ENCODE measurements at regions of chr12 and their contacts with region 1.

Region 1: DNA sequence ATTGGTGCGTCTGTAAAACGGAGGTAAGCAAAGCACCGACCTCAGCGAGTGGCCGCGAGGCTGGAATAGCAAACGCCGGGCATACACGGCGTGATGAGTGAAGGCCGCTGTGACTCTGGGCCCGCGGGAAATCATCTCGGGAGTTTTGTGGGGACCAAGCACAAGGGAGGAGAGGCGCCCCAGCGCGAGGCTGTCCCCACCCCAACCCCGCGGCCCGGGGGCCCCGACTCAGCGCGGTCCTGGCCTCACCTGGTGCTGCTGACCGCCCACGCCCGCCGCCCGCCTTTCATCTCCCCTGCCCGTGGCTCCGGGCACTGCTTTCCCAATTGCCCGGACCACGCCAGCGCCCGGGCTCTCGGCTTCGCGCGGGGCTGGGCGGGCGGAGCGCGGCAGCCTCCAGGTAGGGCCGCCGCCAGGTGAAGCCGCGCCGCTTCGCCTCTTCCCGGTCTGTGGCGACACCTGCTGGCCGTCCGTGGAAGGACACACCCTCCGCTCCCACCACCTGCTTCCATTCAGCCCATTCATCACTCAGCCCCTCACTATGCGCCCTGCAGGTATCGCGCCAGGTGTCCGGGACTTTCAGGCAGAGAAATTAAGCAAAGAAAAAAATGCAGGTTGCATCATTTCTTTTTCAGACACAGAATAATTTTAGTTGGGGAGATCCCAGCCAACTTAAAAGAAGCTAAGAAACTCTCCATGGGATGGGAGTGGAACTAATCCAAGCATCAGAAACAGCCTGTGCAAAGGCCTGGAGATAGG is 360.4 kb downstream of the MED13L start:
- DNase-seq: peak; percentile 72
- ATAC-seq: peak; percentile 71
- H3K4me3 ChIP-seq: no peak overlapping the region
- H3K4me3 Mint-ChIP-seq: peak overlapping the region; percentile 37
- H3K27ac ChIP-seq: no peak overlapping the region
- H3K27ac Mint-ChIP-seq: no peak overlapping the region
- H3K4me1 ChIP-seq: peaks cover 3 to 5% of the 10 kb centered on the region in 2 donors
- H3K4me1 Mint-ChIP-seq: peaks cover 5% of the 10 kb centered on the region
- H3K27me3 ChIP-seq: peaks cover 0 to 19% (median 14%) of the 10 kb centered on the region in 4 experiments
- H3K27me3 Mint-ChIP-seq: peaks cover 63% of the 10 kb centered on the region
- CTCF ChIP-seq: peak; percentile 99

Region 2: GRCh38 chr12:114662512-114663177 is 1254.4 kb before region 1 on chr12:
- CTCF ChIA-PET with region 1: interaction called, 62 read pairs
- POLR2A ChIA-PET with region 1: no interaction called
- intact Hi-C with region 1: no loop called
- DNase-seq: peak; percentile 60
- ATAC-seq: peak; percentile 33
- H3K4me3 ChIP-seq: no peak overlapping the region
- H3K4me3 Mint-ChIP-seq: no peak overlapping the region
- H3K27ac ChIP-seq: no peak overlapping the region
- H3K27ac Mint-ChIP-seq: no peak overlapping the region
- H3K4me1 ChIP-seq: no peaks in the 10 kb centered on the region
- H3K4me1 Mint-ChIP-seq: no peaks in the 10 kb centered on the region
- H3K27me3 ChIP-seq: peaks cover 0 to 42% (median 26%) of the 10 kb centered on the region in 4 experiments
- H3K27me3 Mint-ChIP-seq: peaks cover 49% of the 10 kb centered on the region
- CTCF ChIP-seq: peak; percentile 94

Region 3: GRCh38 chr12:116382686-116383531 is 465.8 kb after region 1 on chr12:
- CTCF ChIA-PET with region 1: no interaction called
- POLR2A ChIA-PET with region 1: no interaction called
- intact Hi-C with region 1: no loop called
- DNase-seq: no peak
- ATAC-seq: no peak
- H3K4me3 ChIP-seq: no peak overlapping the region
- H3K4me3 Mint-ChIP-seq: no peak overlapping the region
- H3K27ac ChIP-seq: no peak overlapping the region
- H3K27ac Mint-ChIP-seq: no peak overlapping the region
- H3K4me1 ChIP-seq: peaks cover 7 to 13% of the 10 kb centered on the region in 2 donors
- H3K4me1 Mint-ChIP-seq: peaks cover 12% of the 10 kb centered on the region
- H3K27me3 ChIP-seq: no peaks in the 10 kb centered on the region
- H3K27me3 Mint-ChIP-seq: peaks cover 8% of the 10 kb centered on the region
- CTCF ChIP-seq: no peak

Measured in B cell (primary cell).